OCI-LY7 (cell line): ENCODE measurements at regions of chr4 and their contacts with region 1.

Region 1: DNA sequence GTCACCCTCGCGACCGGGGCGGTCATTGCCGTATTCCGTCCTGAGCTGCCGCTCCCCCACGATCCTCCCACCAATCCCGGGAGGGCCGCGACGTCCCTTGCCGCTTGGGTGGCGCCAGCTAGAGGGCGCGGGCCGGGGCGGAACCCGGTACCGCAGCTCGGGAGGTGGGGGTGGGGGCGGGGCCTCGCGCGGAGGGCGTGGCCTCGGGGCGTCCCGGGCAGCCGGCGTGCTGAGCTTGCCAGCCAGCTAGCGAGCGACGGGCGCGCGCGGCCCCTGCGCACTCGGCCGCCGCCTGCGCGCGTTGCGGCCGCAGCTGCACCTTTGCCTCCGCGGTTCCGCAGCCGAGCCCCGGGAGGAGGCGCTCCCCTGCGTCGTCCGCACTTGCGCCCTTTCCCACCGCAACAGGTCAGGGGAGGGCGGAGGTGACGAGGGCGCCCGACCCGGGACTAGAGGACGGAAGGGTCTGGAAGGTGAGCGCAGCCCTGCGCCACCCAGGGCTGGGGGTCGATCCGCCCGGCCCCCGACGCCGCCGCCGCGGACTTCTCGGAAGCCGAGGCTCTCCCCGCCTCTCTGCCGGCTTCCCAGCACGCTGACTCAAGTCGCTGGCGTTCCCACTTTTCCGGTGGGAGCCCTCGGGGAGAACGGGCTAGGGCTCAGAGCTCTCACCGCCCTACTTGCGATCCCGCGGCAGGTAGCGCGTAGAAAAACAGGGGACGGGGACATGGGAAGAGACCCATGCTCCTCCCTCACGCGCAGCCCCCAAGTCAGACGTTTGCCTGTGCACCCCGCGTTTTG is at the start of gene AFF1:
- DNase-seq: peak; percentile 91
- H3K4me3 ChIP-seq: peak within 1 kb of the TSS; percentile 92
- H3K27ac ChIP-seq: peak within 1 kb of the TSS; percentile 85
- H3K4me1 ChIP-seq: peaks cover 47% of the 10 kb centered on the region
- CTCF ChIP-seq: peak; percentile 58
- total RNA-seq, gene AFF1: 28.7 and 29.9 TPM in 2 replicates

Region 2: GRCh38 chr4:86961605-86962295 is 26.8 kb after region 1 on chr4:
- CTCF ChIA-PET with region 1: interaction called, 7 read pairs
- POLR2A ChIA-PET with region 1: interaction called, 125 read pairs
- intact Hi-C with region 1: loop called (anchors 1 kb)
- DNase-seq: peak; percentile 95
- H3K4me3 ChIP-seq: peak overlapping the region; percentile 61
- H3K27ac ChIP-seq: peak overlapping the region; percentile 100
- H3K4me1 ChIP-seq: peaks cover 96% of the 10 kb centered on the region
- CTCF ChIP-seq: no peak

Region 3: DNA sequence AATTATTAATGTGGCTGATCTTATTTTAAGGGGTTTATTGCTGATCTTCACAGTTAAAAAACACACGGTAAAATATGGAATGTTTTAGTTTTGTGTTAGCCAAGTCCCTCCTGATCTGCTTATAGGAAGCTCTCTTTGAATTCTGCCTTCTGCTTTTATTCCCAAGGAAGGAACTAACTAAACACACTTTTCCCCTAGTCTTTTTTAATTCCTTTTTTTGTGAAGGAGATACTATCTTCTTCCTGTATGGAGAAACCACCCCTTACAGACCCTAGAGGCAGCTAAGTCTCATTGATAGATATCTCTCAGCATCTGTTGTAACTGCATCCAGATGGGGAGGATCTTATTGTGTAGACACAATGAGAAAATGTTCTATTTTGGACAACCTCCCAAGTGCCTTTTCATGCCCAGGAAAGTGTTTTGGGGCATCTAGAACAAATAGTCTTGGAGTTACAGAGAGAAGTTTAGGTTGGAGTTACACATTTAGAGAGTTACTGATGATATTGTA is 64.2 kb after region 1 on chr4:
- CTCF ChIA-PET with region 1: interaction called, 5 read pairs
- POLR2A ChIA-PET with region 1: interaction called, 41 read pairs
- intact Hi-C with region 1: loop called (anchors 2 kb)
- DNase-seq: no peak
- H3K4me3 ChIP-seq: peak overlapping the region; percentile 55
- H3K27ac ChIP-seq: peak overlapping the region; percentile 96
- H3K4me1 ChIP-seq: peaks cover 77% of the 10 kb centered on the region
- CTCF ChIP-seq: no peak

Region 4: GRCh38 chr4:87093443-87094123 is 158.6 kb after region 1 on chr4:
- CTCF ChIA-PET with region 1: interaction called, 4 read pairs
- POLR2A ChIA-PET with region 1: interaction called, 3 read pairs
- intact Hi-C with region 1: loop called (anchors 1 kb)
- DNase-seq: peak; percentile 80
- H3K4me3 ChIP-seq: no peak overlapping the region
- H3K27ac ChIP-seq: no peak overlapping the region
- H3K4me1 ChIP-seq: peaks cover 22% of the 10 kb centered on the region
- CTCF ChIP-seq: peak; percentile 88

Region 5: GRCh38 chr4:87669373-87669772 is 734.4 kb after region 1 on chr4:
- CTCF ChIA-PET with region 1: no interaction called
- POLR2A ChIA-PET with region 1: no interaction called
- intact Hi-C with region 1: no loop called
- DNase-seq: no peak
- H3K4me3 ChIP-seq: no peak overlapping the region
- H3K27ac ChIP-seq: no peak overlapping the region
- H3K4me1 ChIP-seq: no peaks in the 10 kb centered on the region
- CTCF ChIP-seq: no peak

Region 6: GRCh38 chr4:87985097-87985886 is 1050.3 kb after region 1 on chr4:
- CTCF ChIA-PET with region 1: no interaction called
- POLR2A ChIA-PET with region 1: no interaction called
- intact Hi-C with region 1: no loop called
- DNase-seq: peak; percentile 42
- H3K4me3 ChIP-seq: no peak overlapping the region
- H3K27ac ChIP-seq: no peak overlapping the region
- H3K4me1 ChIP-seq: no peaks in the 10 kb centered on the region
- CTCF ChIP-seq: peak; percentile 71